ENCODE measurements at regions of chr11 and their contacts with region 1.

Region 1: DNA sequence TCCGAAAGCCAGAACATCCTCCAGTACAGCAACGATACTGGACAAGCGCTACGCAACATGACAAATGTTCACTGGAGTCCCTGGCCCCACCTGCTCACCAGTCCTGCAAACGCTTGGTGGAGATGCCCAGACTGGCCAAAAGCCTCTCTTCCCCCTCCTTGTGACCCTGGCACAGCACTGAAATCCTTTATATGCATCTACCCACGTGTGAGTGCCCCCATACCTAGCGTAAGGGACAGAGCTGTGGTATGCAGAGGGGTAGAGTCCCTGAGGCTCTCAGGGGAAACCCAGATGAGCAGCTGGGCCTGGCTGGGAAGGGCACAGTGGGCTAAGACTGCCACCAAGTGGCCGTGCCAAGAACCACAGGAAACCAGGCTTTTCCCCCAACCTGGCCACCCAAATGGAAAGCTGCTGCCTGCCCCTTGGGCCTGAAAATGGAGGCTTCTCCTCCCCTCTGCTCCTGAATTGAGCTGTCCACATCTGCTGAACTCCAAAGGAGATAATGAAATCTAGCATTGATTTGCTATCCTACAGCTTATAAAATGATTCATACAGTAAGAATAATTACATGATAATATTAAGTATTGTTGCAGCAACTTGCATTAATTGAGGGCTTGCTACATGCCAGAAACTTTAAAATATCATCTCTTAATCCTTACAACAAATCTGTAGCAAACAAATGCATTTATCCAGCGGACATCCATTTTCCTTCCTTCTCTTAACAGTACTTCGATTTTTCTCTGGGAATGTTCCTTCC is 24.8 kb upstream of the TTC12 start:
- DNase-seq: peak; percentile 57 to 71 (median 63)
- ATAC-seq: peak; percentile 88
- H3K4me3 ChIP-seq: no peak overlapping the region
- H3K27ac ChIP-seq: no peak overlapping the region
- H3K4me1 ChIP-seq: no peaks in the 10 kb centered on the region
- H3K27me3 ChIP-seq: no peaks in the 10 kb centered on the region
- CTCF ChIP-seq: peak; percentile 78 to 92 (median 87)
- POLR2A ChIP-seq: no peak

Region 2: GRCh38 chr11:112289588-112290492 is 999.8 kb before region 1 on chr11:
- intact Hi-C with region 1: loop called (anchors 10 kb)
- DNase-seq: peak; percentile 69 to 81 (median 73)
- ATAC-seq: peak; percentile 90
- H3K4me3 ChIP-seq: peak overlapping the region in 1 of 2 donors; percentile 21
- H3K27ac ChIP-seq: no peak overlapping the region
- H3K4me1 ChIP-seq: peaks cover 24% of the 10 kb centered on the region
- H3K27me3 ChIP-seq: no peaks in the 10 kb centered on the region
- CTCF ChIP-seq: peak; percentile 63 to 91 (median 81)
- POLR2A ChIP-seq: no peak

Region 3: DNA sequence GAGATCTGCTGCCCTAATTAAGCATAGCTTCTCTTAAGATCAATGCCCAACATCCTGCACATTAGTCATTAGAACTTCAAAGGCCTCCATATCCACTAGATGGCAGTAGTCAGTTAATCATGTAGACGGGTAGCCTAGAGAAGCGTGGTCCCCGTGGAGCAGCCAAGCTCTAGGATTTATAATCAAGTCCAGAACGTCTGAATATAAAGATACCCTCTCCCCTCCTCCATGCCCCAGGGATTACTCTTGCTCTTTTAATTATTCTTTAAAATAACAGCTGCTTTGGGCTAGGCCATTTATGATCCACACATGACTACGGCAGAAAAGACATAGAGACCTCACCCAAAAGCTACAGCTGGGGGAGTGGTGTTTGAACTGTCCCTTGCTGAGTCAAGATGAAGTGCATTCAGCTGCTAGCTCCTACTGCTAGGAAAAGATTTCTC is 701.3 kb before region 1 on chr11:
- intact Hi-C with region 1: loop called (anchors 5 kb)
- DNase-seq: peak; percentile 49 to 76 (median 66)
- ATAC-seq: peak; percentile 92
- H3K4me3 ChIP-seq: no peak overlapping the region
- H3K27ac ChIP-seq: no peak overlapping the region
- H3K4me1 ChIP-seq: no peaks in the 10 kb centered on the region
- H3K27me3 ChIP-seq: no peaks in the 10 kb centered on the region
- CTCF ChIP-seq: peak; percentile 40 to 76 (median 68)
- POLR2A ChIP-seq: no peak

Region 4: GRCh38 chr11:113334183-113334582 is 44.6 kb after region 1 on chr11:
- intact Hi-C with region 1: no loop called
- DNase-seq: no peak
- ATAC-seq: no peak
- H3K4me3 ChIP-seq: no peak overlapping the region
- H3K27ac ChIP-seq: no peak overlapping the region
- H3K4me1 ChIP-seq: no peaks in the 10 kb centered on the region
- H3K27me3 ChIP-seq: no peaks in the 10 kb centered on the region
- CTCF ChIP-seq: no peak
- POLR2A ChIP-seq: no peak

Measured in body of pancreas (tissue), 4 donors.